Aorta (tissue), 5 donors: ENCODE measurements at regions of chr16 and their contacts with region 1.

Region 1: GRCh38 chr16:70162041-70162451 is 11.5 kb upstream of the CLEC18C start:
- DNase-seq: peak; percentile 10 to 59
- ATAC-seq: no peak
- H3K4me3 ChIP-seq: no peak overlapping the region
- H3K27ac ChIP-seq: no peak overlapping the region
- H3K4me1 ChIP-seq: no peaks in the 10 kb centered on the region
- H3K27me3 ChIP-seq: no peaks in the 10 kb centered on the region

Region 2: GRCh38 chr16:70251629-70252354 is 89.7 kb after region 1 on chr16 and contains the start of gene EXOSC6:
- intact Hi-C with region 1: loop called in 1 of 2 experiments (anchors 10 kb)
- DNase-seq: peak; percentile 94 to 97
- ATAC-seq: peak; percentile 98
- H3K4me3 ChIP-seq: peak within 1 kb of the TSS; percentile 77 to 80
- H3K27ac ChIP-seq: peak within 1 kb of the TSS in 1 of 2 donors; percentile 73
- H3K4me1 ChIP-seq: no peaks in the 10 kb centered on the region
- H3K27me3 ChIP-seq: no peaks in the 10 kb centered on the region
- total RNA-seq, gene EXOSC6: 13.4 to 20.0 TPM